Activated naive CD4-positive, alpha-beta T cell treated with anti-CD3 and anti-CD28 coated beads for 36 hours (primary cell): ENCODE measurements at regions of chr1 and their contacts with region 1.

Region 1: GRCh38 chr1:35505908-35506798 is 51.0 kb downstream of the KIAA0319L start:
- DNase-seq: peak; percentile 52
- H3K4me3 Mint-ChIP-seq: no peak overlapping the region
- H3K27ac Mint-ChIP-seq: peak overlapping the region; percentile 54
- H3K4me1 Mint-ChIP-seq: peaks cover 54% of the 10 kb centered on the region
- H3K27me3 Mint-ChIP-seq: no peaks in the 10 kb centered on the region

Region 2: DNA sequence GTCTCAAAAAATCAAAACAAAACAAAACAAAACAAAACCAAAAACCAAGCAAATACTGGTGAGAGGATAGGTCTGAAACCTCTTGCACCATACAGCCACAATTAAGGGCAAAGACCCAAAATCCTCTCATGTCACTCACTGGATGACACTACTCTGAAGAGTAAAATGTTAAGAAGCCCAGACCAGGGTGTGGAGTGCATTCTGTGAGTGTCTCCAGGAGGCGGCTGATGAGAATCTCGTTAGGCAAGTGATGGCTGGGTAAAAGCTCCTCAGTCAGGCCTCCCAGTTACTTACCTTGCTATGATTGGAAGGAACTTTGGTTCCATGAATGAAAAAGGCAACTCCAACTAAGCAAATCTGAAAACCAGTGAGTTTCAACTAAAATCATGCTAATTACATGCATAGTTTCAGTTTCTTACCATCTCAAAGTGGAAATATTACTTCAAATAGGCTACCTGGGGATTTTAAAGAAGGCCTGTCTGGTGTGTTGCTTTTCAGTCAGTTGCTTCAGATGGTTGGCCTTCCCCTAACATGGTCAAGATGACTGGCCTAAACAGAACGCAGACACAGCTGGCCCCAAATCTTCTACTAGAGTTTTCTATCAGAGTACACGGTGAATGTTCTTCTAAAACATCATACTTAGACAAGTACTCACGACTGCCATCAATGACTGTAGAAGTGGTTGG is 44.0 kb before region 1 on chr1:
- CTCF ChIA-PET with region 1: no interaction called
- intact Hi-C with region 1: loop called (anchors 1 kb)
- DNase-seq: peak; percentile 35
- H3K4me3 Mint-ChIP-seq: no peak overlapping the region
- H3K27ac Mint-ChIP-seq: peak overlapping the region; percentile 59
- H3K4me1 Mint-ChIP-seq: peaks cover 14% of the 10 kb centered on the region
- H3K27me3 Mint-ChIP-seq: no peaks in the 10 kb centered on the region

Region 3: GRCh38 chr1:35539073-35539823 is 33.1 kb after region 1 on chr1:
- CTCF ChIA-PET with region 1: interaction called, 4 read pairs
- intact Hi-C with region 1: loop called (anchors 1 kb)
- DNase-seq: peak; percentile 49
- H3K4me3 Mint-ChIP-seq: peak overlapping the region; percentile 70
- H3K27ac Mint-ChIP-seq: peak overlapping the region; percentile 90
- H3K4me1 Mint-ChIP-seq: peaks cover 78% of the 10 kb centered on the region
- H3K27me3 Mint-ChIP-seq: no peaks in the 10 kb centered on the region